Activated CD4-positive, alpha-beta T cell treated with anti-CD3 and anti-CD28 coated beads for 36 hours (primary cell): ENCODE measurements at regions of chr11 and their contacts with region 1.

Region 1: GRCh38 chr11:65261591-65262380 is at the start of gene POLA2:
- DNase-seq: peak; percentile 98
- ATAC-seq: peak; percentile 93
- H3K4me3 Mint-ChIP-seq: peak within 1 kb of the TSS; percentile 98
- H3K27ac Mint-ChIP-seq: peak within 1 kb of the TSS; percentile 96
- H3K4me1 Mint-ChIP-seq: peaks cover 50% of the 10 kb centered on the region
- H3K27me3 Mint-ChIP-seq: no peaks in the 10 kb centered on the region
- total RNA-seq, gene POLA2: 63.1 to 83.3 TPM

Region 2: DNA sequence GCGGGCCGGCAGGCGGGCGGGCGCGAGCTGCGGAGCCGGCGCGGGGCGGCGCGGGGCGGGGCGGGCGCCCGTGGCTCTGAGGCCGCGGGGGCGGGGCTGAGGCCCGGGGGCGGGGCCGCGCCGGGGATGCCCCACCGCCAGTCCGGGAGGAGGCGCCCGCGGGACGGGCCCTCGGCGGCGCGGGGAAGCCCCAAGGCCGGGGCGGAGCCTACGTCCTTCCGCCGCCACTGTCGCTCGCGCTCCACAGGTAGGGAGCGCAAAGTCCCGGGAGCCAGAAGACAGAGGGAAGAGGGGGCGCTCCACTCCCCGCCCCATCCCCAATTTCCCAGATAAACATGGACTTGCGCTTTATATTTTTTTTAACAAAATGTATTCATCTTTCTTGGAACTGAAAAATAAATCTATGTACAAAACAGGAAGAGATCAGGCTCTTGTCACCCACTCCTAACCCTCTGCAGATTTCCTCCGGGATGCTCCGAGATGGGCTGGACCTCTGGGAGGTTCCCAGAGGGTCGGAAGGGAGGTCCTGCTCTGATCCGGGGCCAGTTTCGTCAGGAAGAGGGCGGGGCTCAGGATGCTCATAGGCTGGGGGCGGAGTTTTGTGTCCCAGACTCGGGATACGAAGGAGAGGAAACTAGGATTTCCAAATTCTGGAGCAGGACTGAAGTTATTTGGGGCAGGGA is 458.5 kb before region 1 on chr11 and contains the start of gene MAP4K2:
- CTCF ChIA-PET with region 1: interaction called, 3 read pairs
- POLR2A ChIA-PET with region 1: no interaction called
- intact Hi-C with region 1: loop called in 1 of 2 experiments (anchors 5 kb)
- DNase-seq: peak; percentile 92
- ATAC-seq: peak; percentile 93
- H3K4me3 Mint-ChIP-seq: peak within 1 kb of the TSS; percentile 75
- H3K27ac Mint-ChIP-seq: peak within 1 kb of the TSS; percentile 90
- H3K4me1 Mint-ChIP-seq: peaks cover 27% of the 10 kb centered on the region
- H3K27me3 Mint-ChIP-seq: no peaks in the 10 kb centered on the region
- total RNA-seq, gene MAP4K2: 54.0 to 57.3 TPM

Region 3: DNA sequence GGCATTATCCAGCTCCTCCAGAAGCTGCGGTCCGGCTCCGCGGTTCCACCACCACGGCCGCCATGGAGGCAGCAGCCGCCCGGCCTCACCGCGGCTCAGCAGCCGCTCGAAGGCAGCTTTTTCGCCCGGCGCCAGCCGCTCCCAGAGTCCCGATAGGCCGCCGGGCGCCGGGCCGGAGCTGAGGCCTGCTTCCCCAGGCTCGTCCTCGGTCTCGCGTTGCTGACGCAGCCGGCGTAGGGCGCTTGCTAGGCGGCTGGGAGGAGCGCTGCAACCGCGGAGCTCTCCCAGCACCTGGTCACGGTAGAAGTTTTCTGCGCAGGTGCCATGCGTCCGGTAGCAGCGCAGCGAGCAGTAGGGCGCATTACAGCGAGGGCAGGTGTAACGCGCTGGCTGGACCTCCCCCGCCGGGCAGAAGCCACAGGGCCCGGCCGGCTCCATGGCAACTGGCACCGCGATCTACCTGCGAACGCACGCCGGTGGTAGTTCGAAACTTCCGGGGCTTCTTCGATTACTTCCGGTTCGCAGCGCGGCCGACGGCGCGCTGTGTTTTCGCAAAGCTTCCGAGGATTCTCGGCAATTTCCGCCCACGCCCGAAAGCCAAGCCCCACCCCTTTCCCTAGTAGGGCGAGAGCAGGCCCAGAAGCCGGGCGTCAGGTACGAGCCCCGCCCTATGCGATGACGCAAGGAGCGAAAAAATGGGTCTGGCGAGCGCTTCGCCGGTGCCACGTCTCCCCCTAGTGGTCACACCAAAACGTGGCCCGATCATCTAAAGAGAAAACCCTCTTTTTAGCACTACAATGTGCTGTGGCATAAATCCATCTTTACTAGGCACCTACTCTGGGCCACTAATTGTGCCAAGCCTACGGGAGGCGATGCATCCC is 144.3 kb before region 1 on chr11 and contains the start of gene ZNHIT2:
- CTCF ChIA-PET with region 1: interaction called, 3 read pairs
- POLR2A ChIA-PET with region 1: interaction called, 3 read pairs
- intact Hi-C with region 1: loop called in 1 of 2 experiments (anchors 1 kb)
- DNase-seq: peak; percentile 100
- ATAC-seq: peak; percentile 68
- H3K4me3 Mint-ChIP-seq: peak within 1 kb of the TSS; percentile 88
- H3K27ac Mint-ChIP-seq: peak within 1 kb of the TSS; percentile 95
- H3K4me1 Mint-ChIP-seq: peaks cover 57% of the 10 kb centered on the region
- H3K27me3 Mint-ChIP-seq: no peaks in the 10 kb centered on the region
- total RNA-seq, gene ZNHIT2: 7.1 to 9.7 TPM

Region 4: DNA sequence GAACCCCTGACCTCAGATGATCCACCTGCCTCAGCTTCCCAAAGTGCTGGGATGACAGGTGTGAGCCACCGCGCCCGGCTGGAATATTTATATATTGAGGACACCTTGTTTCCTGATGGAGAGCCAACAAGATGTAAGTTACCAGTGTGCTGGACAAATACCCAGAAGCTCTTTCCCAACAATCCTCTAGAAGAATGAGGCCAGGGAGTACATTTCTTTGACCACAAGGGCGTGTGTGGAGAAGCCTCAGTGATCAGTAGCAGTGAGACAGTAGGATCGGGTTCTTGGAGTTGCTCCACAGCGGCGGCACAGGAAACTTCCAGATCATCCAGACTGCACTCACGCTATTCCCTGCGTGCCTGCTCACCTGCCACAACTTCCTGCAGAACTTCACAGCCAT is 10.3 kb before region 1 on chr11:
- CTCF ChIA-PET with region 1: interaction called, 13 read pairs
- POLR2A ChIA-PET with region 1: interaction called, 3 read pairs
- intact Hi-C with region 1: no loop called
- DNase-seq: no peak
- ATAC-seq: no peak
- H3K4me3 Mint-ChIP-seq: no peak overlapping the region
- H3K27ac Mint-ChIP-seq: no peak overlapping the region
- H3K4me1 Mint-ChIP-seq: no peaks in the 10 kb centered on the region
- H3K27me3 Mint-ChIP-seq: no peaks in the 10 kb centered on the region

Region 5: DNA sequence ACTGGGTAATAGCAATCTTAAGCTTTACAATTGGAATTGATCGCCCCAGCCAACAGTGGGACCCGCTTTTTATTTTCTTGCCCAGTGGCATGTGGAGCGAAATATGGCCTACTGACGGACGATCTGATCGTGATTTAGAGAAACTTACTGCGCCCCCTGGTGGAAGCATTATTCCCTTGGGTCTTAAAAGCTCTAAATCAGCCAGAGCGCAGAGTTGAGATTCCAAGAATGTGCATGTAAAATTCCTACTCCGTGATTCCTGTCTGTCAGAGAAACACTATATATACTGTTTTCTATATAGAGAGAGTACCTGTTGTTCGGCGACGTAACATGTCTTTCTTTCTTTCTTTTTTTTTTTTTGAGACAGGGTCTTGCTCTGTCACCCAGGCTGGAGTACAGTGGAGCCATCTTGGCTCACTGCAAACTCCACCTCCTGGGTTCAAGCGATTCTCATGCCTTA is 68.2 kb after region 1 on chr11:
- CTCF ChIA-PET with region 1: interaction called, 33 read pairs
- POLR2A ChIA-PET with region 1: interaction called, 7 read pairs
- intact Hi-C with region 1: loop called in 1 of 2 experiments (anchors 1 kb)
- DNase-seq: peak; percentile 92
- ATAC-seq: peak; percentile 35
- H3K4me3 Mint-ChIP-seq: no peak overlapping the region
- H3K27ac Mint-ChIP-seq: no peak overlapping the region
- H3K4me1 Mint-ChIP-seq: peaks cover 12% of the 10 kb centered on the region
- H3K27me3 Mint-ChIP-seq: no peaks in the 10 kb centered on the region

Region 6: GRCh38 chr11:65506770-65507505 is 245.2 kb after region 1 on chr11:
- CTCF ChIA-PET with region 1: no interaction called
- POLR2A ChIA-PET with region 1: interaction called, 3 read pairs
- intact Hi-C with region 1: loop called in 1 of 2 experiments (anchors 5 kb)
- DNase-seq: peak; percentile 75
- ATAC-seq: peak; percentile 51
- H3K4me3 Mint-ChIP-seq: no peak overlapping the region
- H3K27ac Mint-ChIP-seq: no peak overlapping the region
- H3K4me1 Mint-ChIP-seq: peaks cover 60% of the 10 kb centered on the region
- H3K27me3 Mint-ChIP-seq: no peaks in the 10 kb centered on the region

Region 7: DNA sequence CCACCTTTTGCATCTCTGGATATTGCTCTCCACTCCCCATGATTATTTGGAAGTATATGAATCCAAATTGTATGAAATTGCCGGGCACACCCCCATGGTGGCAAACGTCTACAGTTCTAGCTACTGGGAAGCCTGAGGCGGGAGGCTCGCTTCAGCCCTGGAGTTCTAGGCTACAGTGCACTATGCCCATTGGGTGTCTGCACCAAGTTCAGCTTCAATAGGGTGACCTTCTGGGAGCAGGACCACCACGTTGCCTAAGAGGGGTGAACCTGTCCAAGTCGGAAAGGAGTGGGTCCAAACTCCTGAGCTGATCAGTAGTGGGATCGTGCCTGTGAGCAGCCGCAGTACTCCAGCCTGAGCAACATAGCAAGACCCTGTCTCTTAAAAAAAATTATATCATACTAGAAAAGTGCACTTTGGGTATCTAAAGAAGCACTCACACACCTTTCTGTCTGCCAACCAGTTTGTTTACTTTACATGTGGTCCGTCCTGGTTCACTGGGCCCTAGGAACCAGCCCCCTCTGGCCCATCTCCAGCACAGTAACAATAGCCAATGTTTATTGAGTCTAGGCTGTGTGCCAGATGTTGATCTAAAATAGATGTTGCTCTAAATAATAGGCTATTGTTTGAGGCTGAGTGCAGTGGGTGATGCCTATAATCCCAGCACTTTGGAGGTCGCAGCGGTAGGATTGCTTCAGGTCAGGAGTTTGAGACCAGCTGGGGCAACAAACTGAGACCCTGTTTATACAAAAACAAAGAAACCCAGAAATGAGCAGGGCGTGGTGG is 433.9 kb after region 1 on chr11:
- CTCF ChIA-PET with region 1: no interaction called
- POLR2A ChIA-PET with region 1: no interaction called
- intact Hi-C with region 1: no loop called
- DNase-seq: no peak
- ATAC-seq: no peak
- H3K4me3 Mint-ChIP-seq: no peak overlapping the region
- H3K27ac Mint-ChIP-seq: no peak overlapping the region
- H3K4me1 Mint-ChIP-seq: no peaks in the 10 kb centered on the region
- H3K27me3 Mint-ChIP-seq: no peaks in the 10 kb centered on the region